Activated B cell treated with CpG ODN at 0.5 μM for 24 hours (primary cell): ENCODE measurements at regions of chr12 and their contacts with region 1.

Region 1: DNA sequence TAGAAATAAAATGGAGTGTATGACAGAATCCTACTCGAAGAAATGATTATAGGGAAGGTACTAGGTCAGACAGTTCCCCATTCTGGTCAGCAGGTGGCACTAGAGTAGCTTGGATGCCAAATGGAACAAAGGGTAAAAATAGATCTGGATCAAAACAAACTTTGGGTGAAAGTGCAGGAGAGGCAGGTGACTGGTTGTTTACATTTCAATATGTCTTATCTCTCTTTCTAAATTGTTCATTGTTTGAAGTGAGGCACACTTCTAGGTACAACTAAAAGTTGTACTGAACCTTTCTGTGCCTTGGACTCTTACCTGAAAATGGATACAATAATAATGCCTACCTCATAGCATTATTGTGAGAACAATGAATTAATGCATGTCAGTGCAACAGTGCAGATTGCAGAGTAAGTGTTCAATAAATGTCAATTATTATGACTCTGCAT is 62.0 kb upstream of the OSBPL8 start:
- DNase-seq: no peak
- ATAC-seq: peak; percentile 70
- H3K4me3 Mint-ChIP-seq: no peak overlapping the region
- H3K27ac Mint-ChIP-seq: no peak overlapping the region
- H3K4me1 Mint-ChIP-seq: peaks cover 3% of the 10 kb centered on the region
- H3K27me3 Mint-ChIP-seq: no peaks in the 10 kb centered on the region
- CTCF ChIP-seq: peak; percentile 47

Region 2: DNA sequence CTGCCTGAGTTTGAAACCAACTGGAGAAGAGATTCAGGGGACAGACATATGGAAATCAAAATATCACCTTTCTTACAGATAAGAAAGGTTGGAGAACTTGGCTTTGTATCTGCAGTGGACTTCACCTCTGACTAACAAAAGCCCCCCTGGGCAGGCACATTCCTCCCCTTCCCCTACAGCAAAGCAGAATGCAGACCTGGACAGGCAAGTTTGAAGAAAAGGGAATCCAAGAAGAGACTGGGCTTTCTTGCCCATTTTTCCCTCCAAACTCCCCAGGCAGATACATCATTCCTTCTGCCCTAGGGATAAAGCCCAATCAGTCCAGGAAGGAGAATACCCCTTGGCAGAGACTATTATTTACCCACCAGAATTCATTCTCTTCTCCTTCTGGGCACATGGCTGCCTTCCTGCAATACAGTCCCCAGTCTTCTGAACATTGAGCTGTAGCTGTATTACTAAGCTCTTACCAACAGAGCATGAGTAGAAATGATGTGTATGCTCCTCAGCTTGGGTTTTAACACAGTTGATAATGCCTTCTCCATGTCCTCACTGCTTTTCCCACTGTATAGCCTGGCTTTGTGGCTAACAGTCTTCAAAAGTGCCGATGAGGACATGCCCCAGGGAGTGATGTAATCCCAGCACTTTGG is 519.7 kb before region 1 on chr12:
- CTCF ChIA-PET with region 1: no interaction called
- POLR2A ChIA-PET with region 1: no interaction called
- intact Hi-C with region 1: no loop called
- DNase-seq: no peak
- ATAC-seq: no peak
- H3K4me3 Mint-ChIP-seq: no peak overlapping the region
- H3K27ac Mint-ChIP-seq: no peak overlapping the region
- H3K4me1 Mint-ChIP-seq: no peaks in the 10 kb centered on the region
- H3K27me3 Mint-ChIP-seq: peaks cover 7% of the 10 kb centered on the region
- CTCF ChIP-seq: no peak

Region 3: DNA sequence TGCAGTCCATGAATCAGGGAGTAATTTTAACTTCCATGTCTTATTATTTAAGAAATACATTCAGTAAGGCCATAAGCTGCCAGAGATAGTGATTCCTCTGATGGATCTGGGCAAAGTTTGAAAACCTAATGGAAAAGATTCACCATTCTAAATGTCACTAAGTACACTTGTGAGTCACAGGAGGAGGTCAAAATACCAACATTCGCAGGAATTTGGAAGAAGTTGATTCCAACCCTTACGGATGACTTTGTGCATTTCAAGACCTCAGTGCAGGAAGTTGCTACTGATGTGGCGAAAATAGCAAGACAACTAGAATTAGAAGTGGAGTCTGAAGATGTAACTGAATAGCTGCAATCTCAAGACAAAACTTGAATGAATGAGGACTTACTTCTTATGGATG is 131.9 kb before region 1 on chr12:
- CTCF ChIA-PET with region 1: no interaction called
- POLR2A ChIA-PET with region 1: no interaction called
- intact Hi-C with region 1: no loop called
- DNase-seq: no peak
- ATAC-seq: no peak
- H3K4me3 Mint-ChIP-seq: no peak overlapping the region
- H3K27ac Mint-ChIP-seq: no peak overlapping the region
- H3K4me1 Mint-ChIP-seq: peaks cover 16% of the 10 kb centered on the region
- H3K27me3 Mint-ChIP-seq: no peaks in the 10 kb centered on the region
- CTCF ChIP-seq: no peak

Region 4: DNA sequence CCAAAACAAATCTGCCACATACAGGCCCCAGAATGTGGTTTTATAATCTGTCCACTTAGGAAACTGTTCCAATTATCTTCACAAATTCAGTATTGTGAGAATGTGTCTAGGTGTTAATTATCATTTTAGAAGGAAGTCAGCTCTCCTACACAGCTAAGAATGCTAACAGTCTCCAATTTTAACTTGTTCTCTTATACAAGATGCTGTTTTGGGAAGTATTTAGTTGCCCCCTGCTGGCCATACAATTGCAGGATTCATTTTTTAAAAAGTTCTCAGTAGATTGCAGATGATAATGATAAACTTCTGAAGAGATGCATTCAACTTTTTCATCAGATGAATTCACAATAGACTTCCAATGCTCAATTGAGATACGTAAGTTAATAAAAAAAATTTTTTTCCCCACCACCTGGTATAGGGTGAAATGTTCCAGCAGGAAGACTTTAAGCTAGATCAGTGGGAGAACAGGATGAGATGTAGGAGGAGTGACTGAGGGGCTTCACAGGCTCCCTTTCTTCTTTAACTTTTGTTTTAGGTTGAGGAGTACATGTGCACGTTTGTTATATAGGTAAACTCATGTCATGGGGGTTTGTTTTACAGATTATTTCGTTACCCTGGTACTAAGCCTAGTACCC is 34.7 kb before region 1 on chr12:
- CTCF ChIA-PET with region 1: no interaction called
- POLR2A ChIA-PET with region 1: no interaction called
- intact Hi-C with region 1: no loop called
- DNase-seq: no peak
- ATAC-seq: peak; percentile 58
- H3K4me3 Mint-ChIP-seq: no peak overlapping the region
- H3K27ac Mint-ChIP-seq: no peak overlapping the region
- H3K4me1 Mint-ChIP-seq: peaks cover 9% of the 10 kb centered on the region
- H3K27me3 Mint-ChIP-seq: no peaks in the 10 kb centered on the region
- CTCF ChIP-seq: peak; percentile 82

Region 5: GRCh38 chr12:76643438-76643837 is 21.8 kb after region 1 on chr12:
- CTCF ChIA-PET with region 1: no interaction called
- POLR2A ChIA-PET with region 1: no interaction called
- intact Hi-C with region 1: no loop called
- DNase-seq: no peak
- ATAC-seq: no peak
- H3K4me3 Mint-ChIP-seq: no peak overlapping the region
- H3K27ac Mint-ChIP-seq: no peak overlapping the region
- H3K4me1 Mint-ChIP-seq: no peaks in the 10 kb centered on the region
- H3K27me3 Mint-ChIP-seq: peaks cover 6% of the 10 kb centered on the region
- CTCF ChIP-seq: no peak

Region 6: DNA sequence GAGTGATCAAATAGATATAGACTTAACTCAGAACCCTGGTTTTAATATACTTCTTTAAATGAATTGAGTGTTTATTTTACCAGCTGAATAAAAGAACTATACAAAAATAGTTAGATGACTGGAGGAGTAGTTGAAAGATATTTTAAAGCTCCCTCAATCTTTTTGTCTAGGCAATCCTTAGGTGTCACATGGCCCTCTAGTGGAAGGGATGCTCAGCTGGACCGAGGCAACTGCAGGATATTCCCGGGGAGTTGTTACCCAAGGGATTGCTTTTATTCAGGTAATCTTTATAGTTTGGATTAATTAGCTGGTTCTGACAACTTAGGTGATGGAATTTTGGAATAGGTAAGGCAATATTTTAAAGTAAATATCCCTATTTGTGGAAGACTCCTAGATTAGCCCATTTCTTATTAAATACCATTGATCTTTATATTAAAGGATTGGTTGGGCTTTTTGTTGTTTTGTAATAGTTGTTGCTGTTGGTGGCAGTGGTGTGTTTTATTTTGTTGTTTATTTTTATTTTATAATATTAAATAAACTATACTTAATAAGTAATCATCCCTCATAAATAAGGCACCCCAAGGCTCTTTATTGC is 199.4 kb after region 1 on chr12:
- CTCF ChIA-PET with region 1: no interaction called
- POLR2A ChIA-PET with region 1: no interaction called
- intact Hi-C with region 1: loop called (anchors 1 kb)
- DNase-seq: no peak
- ATAC-seq: no peak
- H3K4me3 Mint-ChIP-seq: no peak overlapping the region
- H3K27ac Mint-ChIP-seq: no peak overlapping the region
- H3K4me1 Mint-ChIP-seq: no peaks in the 10 kb centered on the region
- H3K27me3 Mint-ChIP-seq: no peaks in the 10 kb centered on the region
- CTCF ChIP-seq: no peak

Region 7: DNA sequence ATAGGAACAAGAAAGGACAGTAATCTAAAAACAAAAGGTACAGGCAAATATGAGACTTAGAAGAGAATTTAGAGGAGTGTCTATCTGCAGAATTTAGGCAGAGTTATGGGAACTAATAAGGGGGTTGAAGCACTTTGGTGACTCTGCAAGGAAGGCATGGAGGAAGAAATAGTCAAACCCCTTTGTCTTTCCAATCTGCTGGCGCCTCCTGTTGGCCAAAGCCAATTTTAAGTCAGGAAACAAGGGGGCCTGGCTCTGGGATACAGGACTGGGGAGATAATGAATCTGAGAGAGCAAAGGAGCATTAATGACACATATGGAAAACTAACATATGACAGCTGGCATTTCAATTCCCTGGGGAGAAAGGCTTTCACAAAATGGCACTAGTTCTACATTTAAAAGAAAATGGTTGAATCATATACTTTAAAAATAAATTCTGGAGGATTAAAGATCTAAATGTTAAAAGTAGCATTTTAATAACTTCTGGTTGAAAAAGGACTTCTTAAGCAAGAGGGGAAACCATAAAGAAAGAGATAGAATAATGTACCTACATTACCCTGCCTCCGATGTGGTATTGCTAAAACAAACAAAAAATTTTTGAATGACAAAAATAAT is 305.7 kb after region 1 on chr12:
- CTCF ChIA-PET with region 1: no interaction called
- POLR2A ChIA-PET with region 1: no interaction called
- intact Hi-C with region 1: loop called (anchors 1 kb)
- DNase-seq: no peak
- ATAC-seq: no peak
- H3K4me3 Mint-ChIP-seq: no peak overlapping the region
- H3K27ac Mint-ChIP-seq: no peak overlapping the region
- H3K4me1 Mint-ChIP-seq: no peaks in the 10 kb centered on the region
- H3K27me3 Mint-ChIP-seq: peaks cover 5% of the 10 kb centered on the region
- CTCF ChIP-seq: no peak

Region 8: DNA sequence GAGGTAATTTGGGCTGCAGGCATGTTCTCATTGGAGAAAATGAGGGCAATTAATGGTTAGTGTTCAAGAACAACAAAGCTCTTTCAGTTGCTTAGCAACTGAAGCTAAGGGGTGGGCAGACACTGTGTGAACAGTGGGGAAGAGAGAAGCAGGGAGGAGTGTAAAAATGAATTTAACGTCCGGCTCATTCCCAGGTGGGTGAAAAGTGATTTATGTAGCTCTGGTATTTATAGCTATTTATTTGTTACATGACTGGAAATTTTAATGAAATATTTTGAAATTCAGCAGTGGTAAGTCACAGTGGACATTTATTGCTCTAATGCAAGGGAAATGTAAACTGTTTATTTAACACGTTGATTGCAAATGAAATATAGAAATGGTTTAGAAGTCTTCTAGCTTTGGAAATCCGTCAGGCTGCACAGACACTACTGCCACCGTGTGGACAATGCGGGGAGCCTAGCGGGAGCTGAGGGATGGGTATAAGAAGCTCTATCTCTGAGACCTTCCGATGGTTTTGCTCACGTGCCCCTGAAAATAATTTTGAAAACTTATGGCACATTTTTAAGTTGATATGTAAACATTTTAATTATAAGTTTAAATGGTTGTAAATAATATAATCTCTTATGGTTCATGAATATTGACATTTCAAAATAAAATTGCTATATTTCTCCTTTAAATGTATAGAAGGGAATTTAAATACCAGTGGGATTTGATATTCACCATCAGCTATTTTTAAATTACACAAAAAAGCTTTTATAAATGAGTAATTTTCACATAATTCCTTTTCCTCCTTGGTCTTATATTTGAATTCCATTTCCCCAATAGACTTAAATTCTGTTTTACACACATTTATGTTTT is 389.3 kb after region 1 on chr12:
- CTCF ChIA-PET with region 1: interaction called, 63 read pairs
- POLR2A ChIA-PET with region 1: no interaction called
- intact Hi-C with region 1: loop called (anchors 1 kb)
- DNase-seq: peak; percentile 29
- ATAC-seq: peak; percentile 79
- H3K4me3 Mint-ChIP-seq: no peak overlapping the region
- H3K27ac Mint-ChIP-seq: no peak overlapping the region
- H3K4me1 Mint-ChIP-seq: peaks cover 4% of the 10 kb centered on the region
- H3K27me3 Mint-ChIP-seq: peaks cover 8% of the 10 kb centered on the region
- CTCF ChIP-seq: peak; percentile 69

Region 9: GRCh38 chr12:77925536-77926108 is 1304.0 kb after region 1 on chr12:
- CTCF ChIA-PET with region 1: no interaction called
- POLR2A ChIA-PET with region 1: no interaction called
- intact Hi-C with region 1: loop called (anchors 5 kb)
- DNase-seq: no peak
- ATAC-seq: peak; percentile 68
- H3K4me3 Mint-ChIP-seq: no peak overlapping the region
- H3K27ac Mint-ChIP-seq: no peak overlapping the region
- H3K4me1 Mint-ChIP-seq: peaks cover 1% of the 10 kb centered on the region
- H3K27me3 Mint-ChIP-seq: no peaks in the 10 kb centered on the region
- CTCF ChIP-seq: no peak